CD8-positive, alpha-beta memory T cell (primary cell): ENCODE measurements at regions of chr12 and their contacts with region 1.

Region 1: DNA sequence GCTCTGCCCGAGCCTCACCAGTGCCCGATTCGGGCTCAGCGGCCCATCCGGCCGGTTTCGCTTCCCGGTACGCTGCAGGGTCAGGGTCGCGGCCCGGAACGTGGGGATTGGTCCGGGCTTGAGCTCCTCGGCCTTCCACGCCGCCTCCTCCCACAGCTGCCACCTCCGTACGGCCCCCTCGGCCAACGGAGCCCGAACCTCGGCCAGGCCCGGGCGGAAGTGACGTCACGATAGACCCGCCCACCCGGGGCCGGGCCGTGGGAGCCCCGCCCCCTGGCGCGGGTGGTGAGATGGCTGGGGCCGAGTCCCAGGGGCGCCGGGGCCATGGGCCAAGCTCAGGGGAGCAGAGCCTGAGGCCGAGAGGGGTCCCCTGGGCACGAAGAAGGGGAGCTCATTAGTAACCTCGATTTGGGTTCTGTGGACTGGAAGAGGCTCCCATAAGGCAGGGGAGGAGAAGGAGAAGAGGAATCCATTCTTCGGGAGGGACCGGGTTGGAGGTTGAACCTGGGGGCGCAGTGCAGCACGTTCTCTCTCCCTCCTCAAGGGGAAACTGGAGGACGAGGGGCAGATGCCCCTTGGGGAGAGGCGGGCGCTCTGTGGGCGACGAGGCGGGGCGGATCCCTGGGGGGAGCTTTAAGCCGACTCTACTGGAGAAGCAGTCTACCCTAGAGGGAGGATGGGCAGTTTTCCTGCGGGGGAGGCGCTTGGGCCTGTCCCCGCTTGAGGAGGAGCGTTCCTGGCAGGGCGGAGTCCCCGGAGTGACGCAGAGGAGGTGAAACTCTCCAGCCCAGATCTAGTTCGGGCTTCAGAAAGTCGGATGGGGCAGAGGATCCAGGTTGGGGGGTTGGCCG is at the start of gene MLF2:
- DNase-seq: peak; percentile 96 to 98 (median 97)
- H3K4me3 ChIP-seq: peak within 1 kb of the TSS; percentile 99
- H3K4me3 Mint-ChIP-seq: peak within 1 kb of the TSS; percentile 96 to 99 (median 97)
- H3K27ac ChIP-seq: peak within 1 kb of the TSS; percentile 98
- H3K27ac Mint-ChIP-seq: peak within 1 kb of the TSS; percentile 98 to 100 (median 99)
- H3K4me1 ChIP-seq: peaks cover 22% of the 10 kb centered on the region
- H3K4me1 Mint-ChIP-seq: peaks cover 24 to 30% (median 29%) of the 10 kb centered on the region in 3 donors
- H3K27me3 ChIP-seq: no peaks in the 10 kb centered on the region
- H3K27me3 Mint-ChIP-seq: no peaks in the 10 kb centered on the region
- total RNA-seq, gene MLF2: 141 to 146 TPM

Region 2: GRCh38 chr12:6723607-6724396 is 29.3 kb before region 1 on chr12 and contains the start of gene COPS7A:
- CTCF ChIA-PET with region 1: interaction called, 26 read pairs
- POLR2A ChIA-PET with region 1: interaction called, 25 read pairs
- DNase-seq: peak; percentile 90 to 96 (median 92)
- H3K4me3 ChIP-seq: peak within 1 kb of the TSS; percentile 77
- H3K4me3 Mint-ChIP-seq: peak within 1 kb of the TSS; percentile 84 to 91 (median 87)
- H3K27ac ChIP-seq: peak within 1 kb of the TSS; percentile 67
- H3K27ac Mint-ChIP-seq: peak within 1 kb of the TSS; percentile 90 to 100 (median 97)
- H3K4me1 ChIP-seq: peaks cover 19% of the 10 kb centered on the region
- H3K4me1 Mint-ChIP-seq: peaks cover 22 to 32% (median 23%) of the 10 kb centered on the region in 3 donors
- H3K27me3 ChIP-seq: no peaks in the 10 kb centered on the region
- H3K27me3 Mint-ChIP-seq: no peaks in the 10 kb centered on the region
- total RNA-seq, gene COPS7A: 48.8 to 49.7 TPM

Region 3: DNA sequence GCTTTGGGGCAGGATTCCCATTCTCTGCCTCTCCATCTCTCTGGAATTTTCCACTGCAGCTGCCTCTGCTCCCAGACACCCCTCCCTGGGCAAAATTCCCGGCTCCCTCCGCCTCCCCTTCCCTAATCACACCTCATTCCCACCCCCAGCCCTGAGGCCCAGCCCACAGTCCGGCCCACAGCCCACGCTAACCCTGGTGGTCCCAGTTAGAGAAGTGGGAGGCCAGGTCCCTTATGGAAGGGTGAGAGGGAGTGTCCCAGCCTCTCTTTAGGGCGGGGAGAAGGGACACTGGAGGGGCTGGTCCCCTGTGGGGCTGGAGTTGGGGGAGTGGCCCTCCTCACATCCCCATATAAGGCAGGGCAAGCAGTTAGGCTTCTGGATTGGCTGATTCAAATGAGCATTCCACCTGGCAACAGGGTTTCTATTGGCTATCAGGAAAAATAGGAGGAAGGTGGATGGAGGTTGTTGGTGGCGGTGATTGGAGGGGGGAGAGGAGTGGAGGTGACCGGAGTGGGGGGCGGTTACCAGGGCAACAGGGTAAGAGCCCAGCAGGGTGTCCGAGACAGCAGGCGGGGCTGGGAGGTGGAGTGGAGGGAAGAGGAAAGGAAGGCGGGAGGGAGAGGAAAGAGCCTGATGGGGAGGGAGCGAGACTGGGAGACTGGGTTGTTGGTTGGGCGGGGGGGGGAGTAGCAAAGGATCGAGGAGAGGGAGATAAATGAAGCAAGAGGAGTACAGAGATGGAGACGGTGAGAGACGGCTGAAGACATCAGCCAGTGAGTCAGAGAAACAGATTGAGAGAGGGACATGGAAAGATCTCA is 11.1 kb after region 1 on chr12:
- CTCF ChIA-PET with region 1: interaction called, 162 read pairs
- POLR2A ChIA-PET with region 1: interaction called, 15 read pairs
- DNase-seq: peak; percentile 50 to 72 (median 54)
- H3K4me3 ChIP-seq: no peak overlapping the region
- H3K4me3 Mint-ChIP-seq: peak overlapping the region; percentile 27 to 97 (median 63)
- H3K27ac ChIP-seq: peak overlapping the region; percentile 33
- H3K27ac Mint-ChIP-seq: peak overlapping the region in 4 of 8 donors; percentile 14 to 78 (median 54)
- H3K4me1 ChIP-seq: peaks cover 30% of the 10 kb centered on the region
- H3K4me1 Mint-ChIP-seq: peaks cover 32 to 45% (median 40%) of the 10 kb centered on the region in 3 donors
- H3K27me3 ChIP-seq: no peaks in the 10 kb centered on the region
- H3K27me3 Mint-ChIP-seq: peaks cover 21 to 27% of the 10 kb centered on the region in 2 donors

Region 4: DNA sequence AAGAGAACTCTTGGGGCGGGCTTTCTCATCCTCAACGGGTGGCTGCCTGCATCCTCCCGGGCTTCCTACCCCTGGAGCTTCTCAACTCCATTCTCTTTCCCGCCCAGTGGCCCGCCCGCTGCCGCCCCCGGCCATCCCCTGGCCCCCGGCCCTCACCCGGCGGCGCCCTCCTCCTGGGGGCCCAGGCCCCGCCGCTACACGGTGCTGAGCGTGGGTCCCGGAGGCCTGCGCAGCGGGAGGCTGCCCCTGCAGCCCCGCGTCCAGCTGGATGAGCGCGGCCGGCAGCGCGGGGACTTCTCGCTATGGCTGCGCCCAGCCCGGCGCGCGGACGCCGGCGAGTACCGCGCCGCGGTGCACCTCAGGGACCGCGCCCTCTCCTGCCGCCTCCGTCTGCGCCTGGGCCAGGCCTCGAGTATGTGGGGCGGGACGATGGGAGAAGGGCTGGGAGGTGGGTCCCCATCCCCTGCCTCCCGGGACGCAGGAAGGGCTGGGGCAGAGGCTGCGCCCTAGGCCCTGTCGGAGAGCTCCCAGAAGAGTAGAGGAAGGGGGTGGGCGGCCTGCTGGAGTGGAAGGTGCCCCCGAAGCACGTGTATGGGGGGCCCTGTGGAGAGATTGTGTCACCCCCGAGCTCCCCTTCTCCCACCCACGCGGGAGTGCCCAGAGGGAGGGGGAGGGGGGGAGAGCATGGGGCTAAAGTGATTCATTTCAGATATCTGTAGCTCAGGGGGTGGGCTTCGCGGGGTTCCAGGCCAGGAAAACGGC is 20.6 kb after region 1 on chr12:
- CTCF ChIA-PET with region 1: interaction called, 162 read pairs
- POLR2A ChIA-PET with region 1: interaction called, 23 read pairs
- DNase-seq: peak in 3 of 5 donors; percentile 14 to 55 (median 20)
- H3K4me3 ChIP-seq: peak overlapping the region; percentile 54
- H3K4me3 Mint-ChIP-seq: peak overlapping the region; percentile 93 to 99 (median 97)
- H3K27ac ChIP-seq: peak overlapping the region; percentile 75
- H3K27ac Mint-ChIP-seq: peak overlapping the region; percentile 94 to 100 (median 99)
- H3K4me1 ChIP-seq: peaks cover 59% of the 10 kb centered on the region
- H3K4me1 Mint-ChIP-seq: peaks cover 53 to 77% (median 59%) of the 10 kb centered on the region in 3 donors
- H3K27me3 ChIP-seq: no peaks in the 10 kb centered on the region
- H3K27me3 Mint-ChIP-seq: peaks cover 2 to 8% of the 10 kb centered on the region in 2 donors

Region 5: GRCh38 chr12:6778574-6779550 is 25.7 kb after region 1 on chr12:
- CTCF ChIA-PET with region 1: interaction called, 162 read pairs
- POLR2A ChIA-PET with region 1: interaction called, 23 read pairs
- DNase-seq: peak; percentile 81 to 92 (median 85)
- H3K4me3 ChIP-seq: peak overlapping the region; percentile 63
- H3K4me3 Mint-ChIP-seq: peak overlapping the region; percentile 74 to 93 (median 77)
- H3K27ac ChIP-seq: no peak overlapping the region
- H3K27ac Mint-ChIP-seq: peak overlapping the region; percentile 54 to 95 (median 86)
- H3K4me1 ChIP-seq: peaks cover 60% of the 10 kb centered on the region
- H3K4me1 Mint-ChIP-seq: peaks cover 35 to 44% (median 40%) of the 10 kb centered on the region in 3 donors
- H3K27me3 ChIP-seq: no peaks in the 10 kb centered on the region
- H3K27me3 Mint-ChIP-seq: peaks cover 0 to 7% of the 10 kb centered on the region in 2 donors

Region 6: DNA sequence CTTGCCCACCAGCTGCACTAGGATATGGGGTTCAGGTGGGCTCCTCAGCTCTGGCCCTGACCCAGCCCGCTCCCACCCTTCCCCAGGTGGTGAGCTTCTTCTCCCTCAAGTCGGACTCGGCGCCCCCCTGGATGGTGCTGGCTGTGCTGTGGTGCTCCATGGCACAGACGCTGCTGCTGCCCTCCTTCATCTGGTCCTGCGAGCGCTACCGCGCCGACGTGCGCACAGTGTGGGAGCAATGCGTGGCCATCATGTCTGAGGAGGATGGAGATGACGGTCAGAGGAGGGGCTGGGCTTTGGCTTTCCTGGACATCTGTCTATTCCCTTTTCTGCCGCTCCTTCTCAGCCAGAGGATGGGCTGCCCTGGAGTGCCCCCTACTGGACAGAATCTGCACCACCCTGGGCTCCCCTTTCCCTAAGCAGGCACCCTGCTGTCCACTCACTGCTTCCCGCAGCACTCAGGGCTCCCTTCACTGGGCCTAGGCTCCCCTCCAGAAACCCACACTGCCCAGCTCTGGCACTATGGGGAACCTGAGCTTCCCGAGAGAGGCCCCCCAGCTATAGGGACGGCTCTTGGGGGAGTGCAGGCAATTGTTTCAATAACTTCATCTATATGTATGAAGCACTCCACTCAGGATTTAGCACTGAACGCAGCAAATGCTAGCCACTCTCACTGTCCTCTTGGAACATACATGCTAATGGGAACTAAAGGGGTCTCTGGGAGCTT is 72.4 kb after region 1 on chr12:
- CTCF ChIA-PET with region 1: interaction called, 34 read pairs
- POLR2A ChIA-PET with region 1: interaction called, 9 read pairs
- DNase-seq: peak; percentile 62 to 80 (median 71)
- H3K4me3 ChIP-seq: no peak overlapping the region
- H3K4me3 Mint-ChIP-seq: peak overlapping the region in 1 of 7 donors; percentile 70
- H3K27ac ChIP-seq: no peak overlapping the region
- H3K27ac Mint-ChIP-seq: no peak overlapping the region
- H3K4me1 ChIP-seq: peaks cover 18% of the 10 kb centered on the region
- H3K4me1 Mint-ChIP-seq: peaks cover 20 to 36% (median 24%) of the 10 kb centered on the region in 3 donors
- H3K27me3 ChIP-seq: peaks cover 25% of the 10 kb centered on the region
- H3K27me3 Mint-ChIP-seq: peaks cover 26 to 68% of the 10 kb centered on the region in 2 donors

Region 7: GRCh38 chr12:6851921-6852650 is 98.9 kb after region 1 on chr12 and contains the start of gene USP5:
- CTCF ChIA-PET with region 1: interaction called, 15 read pairs
- POLR2A ChIA-PET with region 1: interaction called, 4 read pairs
- DNase-seq: peak; percentile 97 to 99 (median 99)
- H3K4me3 ChIP-seq: peak within 1 kb of the TSS; percentile 97
- H3K4me3 Mint-ChIP-seq: peak within 1 kb of the TSS; percentile 86 to 99 (median 94)
- H3K27ac ChIP-seq: peak within 1 kb of the TSS; percentile 77
- H3K27ac Mint-ChIP-seq: peak within 1 kb of the TSS; percentile 99 to 100 (median 100)
- H3K4me1 ChIP-seq: peaks cover 18% of the 10 kb centered on the region
- H3K4me1 Mint-ChIP-seq: peaks cover 20 to 38% (median 20%) of the 10 kb centered on the region in 3 donors
- H3K27me3 ChIP-seq: no peaks in the 10 kb centered on the region
- H3K27me3 Mint-ChIP-seq: no peaks in the 10 kb centered on the region
- total RNA-seq, gene USP5: 154 TPM

Region 8: GRCh38 chr12:6937481-6938297 is 184.5 kb after region 1 on chr12:
- CTCF ChIA-PET with region 1: no interaction called
- POLR2A ChIA-PET with region 1: no interaction called
- DNase-seq: peak; percentile 90 to 96 (median 93)
- H3K4me3 ChIP-seq: peak overlapping the region; percentile 86
- H3K4me3 Mint-ChIP-seq: peak overlapping the region; percentile 82 to 91 (median 85)
- H3K27ac ChIP-seq: peak overlapping the region; percentile 87
- H3K27ac Mint-ChIP-seq: peak overlapping the region; percentile 92 to 98 (median 94)
- H3K4me1 ChIP-seq: peaks cover 34% of the 10 kb centered on the region
- H3K4me1 Mint-ChIP-seq: peaks cover 27 to 49% (median 35%) of the 10 kb centered on the region in 3 donors
- H3K27me3 ChIP-seq: no peaks in the 10 kb centered on the region
- H3K27me3 Mint-ChIP-seq: peaks cover 0 to 1% of the 10 kb centered on the region in 2 donors